Activated CD4-positive, alpha-beta T cell treated with anti-CD3 and anti-CD28 coated beads, Interleukin-2, amount 10 ng/mL, durations not matched to agents 24 days and 14 days (primary cell): ENCODE measurements at regions of chr10 and their contacts with region 1.

Region 1: GRCh38 chr10:79445141-79445976 is at the start of gene ZCCHC24:
- DNase-seq: peak; percentile 98
- H3K4me3 Mint-ChIP-seq: peak within 1 kb of the TSS; percentile 86
- H3K27ac Mint-ChIP-seq: peak within 1 kb of the TSS; percentile 66
- H3K4me1 Mint-ChIP-seq: peaks cover 22% of the 10 kb centered on the region
- H3K27me3 Mint-ChIP-seq: peaks cover 44% of the 10 kb centered on the region
- total RNA-seq, gene ZCCHC24: 0.66 and 1.4 TPM in 2 replicates

Region 2: DNA sequence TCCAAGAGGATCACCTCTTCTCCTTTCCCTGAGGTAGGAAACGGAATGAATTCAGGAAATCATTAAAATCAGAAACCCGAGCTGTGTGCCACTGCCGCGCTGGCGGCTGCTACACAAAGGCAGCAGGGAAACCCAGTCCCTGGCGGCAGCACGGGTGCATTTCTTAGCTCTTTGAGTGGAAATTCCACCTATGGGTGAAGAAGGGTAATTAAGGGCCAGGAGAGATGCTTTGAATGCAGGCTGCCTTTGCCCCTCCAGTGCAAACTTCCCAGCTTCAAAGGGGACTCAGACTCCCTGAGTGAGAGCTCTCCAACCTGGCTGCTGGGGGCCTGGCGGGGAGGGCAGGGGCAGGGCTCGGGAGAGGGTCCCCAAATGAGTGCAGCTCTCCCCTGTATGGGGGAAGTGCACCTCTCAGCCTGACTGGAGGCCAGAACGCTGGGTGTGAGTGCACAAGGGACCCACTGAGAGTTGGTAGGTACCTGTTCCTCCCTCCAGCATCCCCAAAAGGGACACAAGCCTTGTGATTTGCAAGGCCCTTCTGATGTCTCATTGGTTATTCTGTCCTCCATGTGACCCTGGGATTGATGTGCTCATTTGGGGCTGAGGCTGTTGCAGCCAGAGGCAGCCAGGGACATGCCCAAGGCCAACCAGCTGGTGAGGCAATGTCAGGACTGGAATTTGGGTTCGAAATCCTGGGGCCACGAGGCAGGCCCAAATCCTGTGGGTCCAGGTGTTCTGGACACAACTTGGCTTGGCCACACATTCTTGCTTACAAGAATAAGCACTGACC is 392.9 kb before region 1 on chr10:
- intact Hi-C with region 1: no loop called
- DNase-seq: peak; percentile 76
- H3K4me3 Mint-ChIP-seq: no peak overlapping the region
- H3K27ac Mint-ChIP-seq: no peak overlapping the region
- H3K4me1 Mint-ChIP-seq: peaks cover 26% of the 10 kb centered on the region
- H3K27me3 Mint-ChIP-seq: no peaks in the 10 kb centered on the region

Region 3: GRCh38 chr10:79374312-79375191 is 70.8 kb before region 1 on chr10:
- intact Hi-C with region 1: loop called (anchors 2 kb)
- DNase-seq: peak; percentile 93
- H3K4me3 Mint-ChIP-seq: no peak overlapping the region
- H3K27ac Mint-ChIP-seq: peak overlapping the region; percentile 14
- H3K4me1 Mint-ChIP-seq: peaks cover 3% of the 10 kb centered on the region
- H3K27me3 Mint-ChIP-seq: peaks cover 16% of the 10 kb centered on the region

Region 4: DNA sequence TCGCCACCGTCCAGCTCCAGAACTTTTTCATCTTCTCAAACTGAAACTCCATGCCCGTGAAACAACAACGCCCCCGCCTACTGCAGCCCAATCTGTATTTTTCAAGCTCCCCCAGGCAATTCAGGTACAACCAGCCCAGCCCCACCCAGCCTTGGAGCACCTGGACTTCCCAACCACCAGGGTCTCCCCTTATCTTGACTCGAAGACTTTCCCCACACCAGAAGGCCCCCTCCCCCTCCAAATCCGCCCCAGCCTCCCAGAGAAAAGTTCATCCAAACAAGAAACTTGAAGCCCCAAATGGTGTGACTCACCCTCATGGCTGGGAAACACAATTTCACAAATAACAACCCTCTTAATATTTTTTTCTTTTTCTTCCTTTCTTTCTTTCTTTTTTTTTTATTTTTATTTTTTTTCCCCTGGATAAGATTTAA is 10.5 kb before region 1 on chr10:
- intact Hi-C with region 1: loop called (anchors 1 kb)
- DNase-seq: no peak
- H3K4me3 Mint-ChIP-seq: peak overlapping the region; percentile 15
- H3K27ac Mint-ChIP-seq: peak overlapping the region; percentile 76
- H3K4me1 Mint-ChIP-seq: peaks cover 12% of the 10 kb centered on the region
- H3K27me3 Mint-ChIP-seq: peaks cover 11% of the 10 kb centered on the region